ENCODE measurements at regions of chrX and their contacts with region 1.

Region 1: DNA sequence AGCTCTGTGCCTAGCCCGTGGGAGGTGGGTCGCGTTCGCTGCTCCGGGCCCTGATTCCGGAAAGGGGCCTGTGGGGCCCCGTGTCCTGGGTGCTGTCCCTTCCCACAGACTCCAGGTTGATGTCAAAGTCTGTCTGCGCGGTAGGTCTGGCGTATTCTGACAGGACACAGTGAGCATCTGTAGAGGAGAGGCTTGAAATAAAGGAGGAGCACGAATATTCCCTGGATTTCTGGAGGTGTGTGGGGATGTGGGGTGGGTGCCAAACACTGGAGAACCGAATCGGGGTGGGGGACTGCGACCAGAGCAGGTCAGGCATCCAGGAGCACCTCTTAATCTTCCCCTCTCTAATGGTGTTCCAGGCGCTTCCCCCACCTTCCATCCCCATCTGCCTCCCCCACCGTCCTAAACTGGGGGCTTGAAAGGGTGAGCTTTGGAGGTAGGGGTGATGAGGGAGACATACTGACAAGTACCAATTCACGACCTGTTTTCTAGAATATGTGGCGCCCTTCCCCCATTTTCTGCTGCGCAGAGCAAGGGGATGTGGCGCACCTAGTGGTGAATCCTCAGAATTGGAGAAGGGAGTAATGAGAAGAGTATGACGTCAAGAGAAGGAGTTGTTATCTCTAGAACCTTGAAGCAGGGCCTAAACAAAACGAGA is 877 bp downstream of the GPRASP1 start:
- DNase-seq: no peak
- H3K4me3 Mint-ChIP-seq: peak overlapping the region; percentile 77
- H3K27ac Mint-ChIP-seq: peak overlapping the region; percentile 65
- H3K4me1 Mint-ChIP-seq: peaks cover 11% of the 10 kb centered on the region
- H3K27me3 Mint-ChIP-seq: peaks cover 13% of the 10 kb centered on the region

Region 2: DNA sequence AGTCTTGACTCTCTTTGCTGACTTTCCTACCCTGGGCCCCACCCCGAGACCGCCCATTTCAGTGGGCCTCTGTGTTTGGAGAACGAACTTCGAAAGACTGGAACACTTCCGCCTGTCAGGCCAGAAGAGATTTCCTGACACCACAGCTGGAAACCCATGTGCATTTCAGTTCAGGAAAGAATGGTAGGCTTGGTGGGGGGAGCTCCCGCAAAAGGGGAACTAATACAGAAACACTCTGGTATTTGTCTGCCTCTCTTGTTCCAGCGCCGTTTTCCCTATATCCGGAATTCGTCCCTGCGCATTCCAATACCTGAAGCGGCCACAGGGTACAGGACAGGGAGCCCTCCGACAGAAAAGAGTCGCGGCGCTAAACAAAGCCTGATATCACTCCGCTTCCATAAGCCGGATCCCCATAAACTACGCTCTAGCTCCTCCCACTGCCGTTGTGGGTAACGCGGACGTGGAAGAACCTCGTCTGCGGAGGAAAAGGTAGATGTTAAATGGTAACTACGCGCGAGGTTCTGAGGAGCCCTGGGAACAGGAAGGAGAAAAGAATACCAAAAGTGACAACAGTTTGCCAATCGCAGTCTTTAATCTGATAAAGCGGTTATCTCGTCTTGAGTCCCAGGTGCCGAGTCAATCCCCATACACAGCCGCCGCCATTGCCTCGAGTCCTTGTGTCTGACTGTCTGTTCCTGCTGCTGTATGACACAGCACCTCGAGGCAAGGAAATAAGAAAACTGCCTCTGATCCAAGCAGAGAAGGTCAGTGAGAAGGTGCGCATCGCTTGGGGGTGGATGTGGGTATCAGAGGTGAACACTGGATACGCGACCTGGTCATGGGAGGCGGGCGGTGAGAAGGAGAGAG is 52.8 kb before region 1 on chrX and contains the start of gene ARMCX5:
- intact Hi-C with region 1: loop called (anchors 2 kb)
- DNase-seq: peak; percentile 64
- H3K4me3 Mint-ChIP-seq: peak within 1 kb of the TSS; percentile 97
- H3K27ac Mint-ChIP-seq: peak within 1 kb of the TSS; percentile 90
- H3K4me1 Mint-ChIP-seq: peaks cover 13% of the 10 kb centered on the region
- H3K27me3 Mint-ChIP-seq: no peaks in the 10 kb centered on the region
- total RNA-seq, gene ARMCX5: 7.1 and 7.7 TPM in 2 replicates